Activated CD4-positive, alpha-beta T cell treated with anti-CD3 and anti-CD28 coated beads for 36 hours (primary cell): ENCODE measurements at regions of chr18 and their contacts with region 1.

Region 1: GRCh38 chr18:46173393-46174341 is 69.5 kb downstream of the HAUS1 start:
- DNase-seq: peak; percentile 96
- ATAC-seq: peak; percentile 90
- H3K4me3 Mint-ChIP-seq: peak overlapping the region; percentile 97
- H3K27ac Mint-ChIP-seq: peak overlapping the region; percentile 99
- H3K4me1 Mint-ChIP-seq: peaks cover 37% of the 10 kb centered on the region
- H3K27me3 Mint-ChIP-seq: no peaks in the 10 kb centered on the region

Region 2: GRCh38 chr18:46155641-46156051 is 18.0 kb before region 1 on chr18:
- CTCF ChIA-PET with region 1: interaction called, 27 read pairs
- POLR2A ChIA-PET with region 1: no interaction called
- intact Hi-C with region 1: loop called in 1 of 2 experiments (anchors 2 kb)
- DNase-seq: peak; percentile 60
- ATAC-seq: peak; percentile 83
- H3K4me3 Mint-ChIP-seq: no peak overlapping the region
- H3K27ac Mint-ChIP-seq: peak overlapping the region; percentile 85
- H3K4me1 Mint-ChIP-seq: peaks cover 49% of the 10 kb centered on the region
- H3K27me3 Mint-ChIP-seq: no peaks in the 10 kb centered on the region

Region 3: GRCh38 chr18:46213295-46213694 is 39.6 kb after region 1 on chr18:
- CTCF ChIA-PET with region 1: interaction called, 28 read pairs
- POLR2A ChIA-PET with region 1: interaction called, 4 read pairs
- intact Hi-C with region 1: loop called (anchors 1 kb)
- DNase-seq: no peak
- ATAC-seq: no peak
- H3K4me3 Mint-ChIP-seq: no peak overlapping the region
- H3K27ac Mint-ChIP-seq: no peak overlapping the region
- H3K4me1 Mint-ChIP-seq: peaks cover 87% of the 10 kb centered on the region
- H3K27me3 Mint-ChIP-seq: no peaks in the 10 kb centered on the region

Region 4: DNA sequence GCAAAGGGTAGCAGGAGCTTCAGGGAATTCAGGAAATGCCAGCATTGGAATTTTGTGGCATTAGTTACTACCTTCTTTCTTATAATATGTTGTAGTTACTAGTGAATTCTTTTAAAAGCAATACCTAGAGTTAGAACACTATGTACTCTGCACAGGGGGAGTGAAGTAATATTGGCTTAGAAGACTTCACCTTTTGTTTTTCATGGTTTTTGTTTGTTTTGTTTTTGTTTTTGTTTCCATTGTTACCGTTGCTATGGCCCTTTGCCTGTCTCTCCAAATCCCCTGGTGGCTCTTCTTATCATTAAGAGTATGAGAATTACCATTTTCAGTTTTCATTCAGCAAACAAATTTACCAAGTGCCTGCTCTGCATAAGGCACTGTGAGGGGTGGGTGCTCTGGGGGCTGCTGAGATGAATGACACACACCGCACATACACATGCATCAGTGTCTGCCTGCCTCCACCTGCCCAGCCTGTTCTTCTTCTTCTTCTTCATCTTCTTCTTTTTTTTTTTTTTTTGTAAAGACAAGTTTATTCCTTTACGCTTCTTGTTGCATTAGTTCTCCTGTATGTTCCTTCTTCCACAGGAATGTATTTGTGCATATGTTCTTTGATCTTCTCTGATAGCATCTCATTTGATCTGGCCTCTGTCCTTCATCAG is 90.7 kb after region 1 on chr18:
- CTCF ChIA-PET with region 1: interaction called, 8 read pairs
- POLR2A ChIA-PET with region 1: no interaction called
- intact Hi-C with region 1: loop called in 1 of 2 experiments (anchors 5 kb)
- DNase-seq: no peak
- ATAC-seq: peak; percentile 30
- H3K4me3 Mint-ChIP-seq: no peak overlapping the region
- H3K27ac Mint-ChIP-seq: no peak overlapping the region
- H3K4me1 Mint-ChIP-seq: peaks cover 57% of the 10 kb centered on the region
- H3K27me3 Mint-ChIP-seq: no peaks in the 10 kb centered on the region

Region 5: GRCh38 chr18:46481048-46481846 is 307.6 kb after region 1 on chr18:
- CTCF ChIA-PET with region 1: interaction called, 5 read pairs
- POLR2A ChIA-PET with region 1: no interaction called
- intact Hi-C with region 1: loop called (anchors 1 to 2 kb)
- DNase-seq: peak; percentile 71
- ATAC-seq: peak; percentile 42
- H3K4me3 Mint-ChIP-seq: no peak overlapping the region
- H3K27ac Mint-ChIP-seq: no peak overlapping the region
- H3K4me1 Mint-ChIP-seq: no peaks in the 10 kb centered on the region
- H3K27me3 Mint-ChIP-seq: peaks cover 2% of the 10 kb centered on the region

Region 6: GRCh38 chr18:46917108-46917802 is 743.6 kb after region 1 on chr18 and contains the starts of genes KATNAL2 and PIAS2:
- CTCF ChIA-PET with region 1: no interaction called
- POLR2A ChIA-PET with region 1: no interaction called
- intact Hi-C with region 1: loop called in 1 of 2 experiments (anchors 2 kb)
- DNase-seq: peak; percentile 83
- ATAC-seq: peak; percentile 92
- H3K4me3 Mint-ChIP-seq: peak within 1 kb of the TSS; percentile 92
- H3K27ac Mint-ChIP-seq: peak within 1 kb of the TSS; percentile 91
- H3K4me1 Mint-ChIP-seq: peaks cover 45% of the 10 kb centered on the region
- H3K27me3 Mint-ChIP-seq: no peaks in the 10 kb centered on the region
- total RNA-seq, gene KATNAL2: 1.1 to 1.4 TPM
- total RNA-seq, gene PIAS2: 27.1 to 28.2 TPM